ENCODE measurements at regions of chr21 and their contacts with region 1.

Region 1: GRCh38 chr21:28884976-28885852 is 107.5 kb downstream of the LTN1 start:
- DNase-seq: peak; percentile 90
- H3K4me3 Mint-ChIP-seq: peak overlapping the region; percentile 97
- H3K27ac Mint-ChIP-seq: peak overlapping the region; percentile 99
- H3K4me1 Mint-ChIP-seq: peaks cover 8% of the 10 kb centered on the region
- H3K27me3 Mint-ChIP-seq: peaks cover 32% of the 10 kb centered on the region
- CTCF ChIP-seq: no peak

Region 2: DNA sequence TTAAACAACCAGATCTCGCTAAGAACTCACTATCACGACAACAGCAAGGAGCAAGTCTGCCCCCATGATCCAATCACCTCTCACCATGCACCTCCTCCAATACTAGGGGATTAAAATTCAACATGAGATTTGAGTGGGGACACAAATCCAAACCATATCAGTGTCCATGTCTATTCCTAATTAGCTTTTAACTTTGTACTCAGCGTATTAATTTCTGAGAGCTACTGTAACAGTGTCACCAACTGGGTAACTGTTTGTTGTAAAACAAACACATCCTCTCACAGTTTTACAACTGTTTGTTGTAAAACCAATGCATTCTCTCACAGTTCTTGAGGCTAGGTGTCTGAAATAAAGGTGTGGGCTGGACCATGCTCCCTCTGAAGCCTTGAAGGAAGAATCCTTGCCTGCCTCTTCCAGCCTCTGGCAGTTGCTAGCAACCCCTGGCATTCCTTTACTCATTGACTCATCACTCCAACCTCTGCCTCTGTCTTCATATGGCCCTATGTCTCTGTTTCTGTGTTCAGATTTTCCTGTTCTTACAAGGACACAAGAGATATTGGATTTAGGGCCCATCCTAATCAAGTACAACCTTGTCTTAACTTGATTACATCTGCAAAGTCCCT is 13.7 kb before region 1 on chr21:
- CTCF ChIA-PET with region 1: interaction called, 4 read pairs
- POLR2A ChIA-PET with region 1: interaction called, 17 read pairs
- intact Hi-C with region 1: no loop called
- DNase-seq: peak; percentile 14
- H3K4me3 Mint-ChIP-seq: no peak overlapping the region
- H3K27ac Mint-ChIP-seq: no peak overlapping the region
- H3K4me1 Mint-ChIP-seq: peaks cover 10% of the 10 kb centered on the region
- H3K27me3 Mint-ChIP-seq: no peaks in the 10 kb centered on the region
- CTCF ChIP-seq: no peak

Region 3: GRCh38 chr21:29298348-29299045 is 413.3 kb after region 1 on chr21 and contains the start of gene BACH1:
- CTCF ChIA-PET with region 1: no interaction called
- POLR2A ChIA-PET with region 1: no interaction called
- intact Hi-C with region 1: no loop called
- DNase-seq: peak; percentile 88
- H3K4me3 Mint-ChIP-seq: peak within 1 kb of the TSS; percentile 81
- H3K27ac Mint-ChIP-seq: peak within 1 kb of the TSS; percentile 61
- H3K4me1 Mint-ChIP-seq: peaks cover 38% of the 10 kb centered on the region
- H3K27me3 Mint-ChIP-seq: no peaks in the 10 kb centered on the region
- CTCF ChIP-seq: peak; percentile 35
- total RNA-seq, gene BACH1: 69.3 and 76.6 TPM in 2 replicates